CD4-positive, alpha-beta T cell (primary cell): ENCODE measurements at regions of chr7 and their contacts with region 1.

Region 1: GRCh38 chr7:35647171-35647574 is 47.8 kb downstream of the HERPUD2 start:
- DNase-seq: no peak
- ATAC-seq: no peak
- H3K4me3 ChIP-seq: no peak overlapping the region
- H3K4me3 Mint-ChIP-seq: no peak overlapping the region
- H3K27ac ChIP-seq: no peak overlapping the region
- H3K27ac Mint-ChIP-seq: peak overlapping the region; percentile 64
- H3K4me1 ChIP-seq: peaks cover 32% of the 10 kb centered on the region
- H3K4me1 Mint-ChIP-seq: peaks cover 82% of the 10 kb centered on the region
- H3K27me3 ChIP-seq: no peaks in the 10 kb centered on the region
- H3K27me3 Mint-ChIP-seq: no peaks in the 10 kb centered on the region
- CTCF ChIP-seq: no peak

Region 2: GRCh38 chr7:35681231-35682029 is 34.3 kb after region 1 on chr7:
- CTCF ChIA-PET with region 1: no interaction called
- POLR2A ChIA-PET with region 1: no interaction called
- intact Hi-C with region 1: loop called in 1 of 2 experiments (anchors 5 kb)
- DNase-seq: peak in 1 of 14 experiments; percentile 35
- ATAC-seq: no peak
- H3K4me3 ChIP-seq: no peak overlapping the region
- H3K4me3 Mint-ChIP-seq: no peak overlapping the region
- H3K27ac ChIP-seq: no peak overlapping the region
- H3K27ac Mint-ChIP-seq: peak overlapping the region; percentile 6
- H3K4me1 ChIP-seq: peaks cover 18% of the 10 kb centered on the region
- H3K4me1 Mint-ChIP-seq: peaks cover 63% of the 10 kb centered on the region
- H3K27me3 ChIP-seq: no peaks in the 10 kb centered on the region
- H3K27me3 Mint-ChIP-seq: no peaks in the 10 kb centered on the region
- CTCF ChIP-seq: no peak